Right ventricle myocardium inferior (tissue), 1 donor: ENCODE measurements at regions of chr5 and their contacts with region 1.

Region 1: DNA sequence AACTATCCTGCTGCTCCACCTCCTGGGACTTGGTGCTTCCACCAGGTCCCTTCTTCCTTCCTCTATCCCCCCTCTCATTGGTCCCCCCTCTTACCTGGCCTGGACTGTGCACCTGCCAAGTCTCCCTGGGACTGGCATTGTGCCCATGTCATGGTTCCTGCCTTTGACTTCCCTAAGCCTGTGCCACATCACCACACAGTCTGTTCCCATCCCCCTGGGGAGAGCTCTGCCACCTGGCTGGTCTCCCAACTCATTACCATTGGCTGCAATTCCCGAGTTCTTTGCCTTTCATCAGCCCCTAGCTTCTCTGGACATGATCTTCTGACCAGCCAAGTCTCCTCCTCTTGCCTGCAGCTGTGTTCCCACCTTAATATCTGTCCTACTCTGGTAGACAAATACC is 180.3 kb downstream of the SREK1 start:
- DNase-seq: peak; percentile 64
- ATAC-seq: peak; percentile 83

Region 2: DNA sequence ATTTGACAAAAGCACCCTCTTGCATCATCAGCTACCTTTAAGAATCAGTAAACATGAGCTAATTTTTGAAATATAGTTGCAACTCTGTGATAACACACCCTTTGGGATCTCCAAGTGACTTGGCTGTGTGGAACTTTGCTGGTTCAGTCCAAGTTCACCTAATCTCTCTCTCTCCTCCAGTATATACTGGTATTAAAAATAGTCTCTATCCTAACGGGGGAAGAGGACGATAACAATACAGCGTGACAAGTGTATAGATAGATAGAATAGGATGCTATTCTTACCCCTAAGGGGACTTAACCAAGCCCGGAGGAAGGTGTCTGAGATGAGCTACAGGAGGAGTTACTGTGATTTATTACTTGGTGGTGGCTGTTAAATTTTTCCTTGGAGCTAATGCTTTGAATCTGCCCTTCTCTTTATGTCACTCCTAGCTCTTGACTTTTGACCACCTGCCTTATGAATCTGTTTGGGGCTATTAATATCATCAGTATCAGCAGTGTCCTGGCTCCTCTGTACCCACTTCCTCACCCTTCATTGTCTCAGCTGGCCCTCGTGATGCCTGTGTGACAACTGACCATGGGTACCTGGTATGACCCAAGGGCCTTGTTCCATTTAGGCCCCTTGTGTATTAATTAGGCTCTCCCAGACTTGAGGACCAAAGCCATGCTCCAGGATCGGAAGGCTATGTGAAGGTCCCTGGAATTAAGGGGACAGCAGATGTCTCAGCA is 43.6 kb after region 1 on chr5:
- intact Hi-C with region 1: loop called (anchors 2 kb)
- DNase-seq: no peak
- ATAC-seq: peak; percentile 91

Region 3: GRCh38 chr5:66454186-66455078 is 130.1 kb after region 1 on chr5:
- intact Hi-C with region 1: no loop called
- DNase-seq: no peak
- ATAC-seq: no peak

Region 4: GRCh38 chr5:66498791-66499207 is 174.4 kb after region 1 on chr5:
- intact Hi-C with region 1: loop called (anchors 5 kb)
- DNase-seq: no peak
- ATAC-seq: peak; percentile 88